Sigmoid colon (tissue), 7 donors: ENCODE measurements at regions of chr22 and their contacts with region 1.

Region 1: DNA sequence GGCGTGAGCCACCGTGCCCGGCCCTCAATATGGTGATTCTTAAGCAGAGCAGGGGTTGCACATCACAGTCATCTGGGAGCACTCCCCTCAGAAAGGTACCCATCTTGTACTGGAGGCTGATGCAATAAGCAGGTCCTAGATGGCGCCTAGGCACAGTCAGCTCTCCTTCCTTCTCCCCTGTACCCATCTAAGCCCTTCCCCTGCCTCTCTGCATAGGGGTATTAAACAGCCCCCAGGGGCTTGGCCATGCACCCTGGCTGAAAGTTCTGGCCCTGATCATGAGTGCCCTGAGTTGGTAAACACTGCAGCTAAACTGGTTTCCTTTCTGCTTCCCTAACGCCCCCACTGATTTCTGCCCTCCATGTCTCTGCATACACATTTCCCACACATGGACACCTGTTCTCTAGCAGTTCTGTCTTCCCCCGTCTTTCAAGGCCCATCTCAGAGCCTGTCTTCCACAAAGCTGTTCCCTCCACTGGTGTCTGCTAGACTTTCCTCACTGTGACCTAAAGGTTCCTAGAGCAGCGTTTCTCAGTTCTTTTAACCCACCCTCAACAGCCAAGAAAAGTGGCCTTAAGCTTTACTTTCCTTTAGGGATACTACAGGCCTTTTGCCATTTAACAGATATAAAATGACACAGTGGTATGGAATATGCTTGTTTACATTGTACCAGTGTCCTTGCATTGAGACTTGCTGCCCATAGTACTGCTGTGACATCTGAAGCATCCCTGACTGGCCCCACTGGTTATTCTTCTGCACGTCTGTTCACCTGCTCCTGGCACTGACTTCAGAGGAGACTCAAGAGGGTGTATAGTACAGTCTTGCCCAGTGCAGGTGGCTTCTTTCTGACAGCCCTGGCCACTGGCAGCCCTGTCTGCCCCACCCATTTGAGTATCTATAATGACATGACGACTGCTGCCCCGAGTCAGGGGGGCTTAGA is 15.6 kb downstream of the UBE2L3 start:
- DNase-seq: no peak
- H3K4me3 ChIP-seq: no peak overlapping the region
- H3K27ac ChIP-seq: no peak overlapping the region
- H3K4me1 ChIP-seq: peaks cover 0 to 48% (median 42%) of the 10 kb centered on the region in 4 donors
- H3K27me3 ChIP-seq: no peaks in the 10 kb centered on the region
- CTCF ChIP-seq: no peak
- EP300 ChIP-seq: no peak
- POLR2A ChIP-seq: no peak

Region 2: DNA sequence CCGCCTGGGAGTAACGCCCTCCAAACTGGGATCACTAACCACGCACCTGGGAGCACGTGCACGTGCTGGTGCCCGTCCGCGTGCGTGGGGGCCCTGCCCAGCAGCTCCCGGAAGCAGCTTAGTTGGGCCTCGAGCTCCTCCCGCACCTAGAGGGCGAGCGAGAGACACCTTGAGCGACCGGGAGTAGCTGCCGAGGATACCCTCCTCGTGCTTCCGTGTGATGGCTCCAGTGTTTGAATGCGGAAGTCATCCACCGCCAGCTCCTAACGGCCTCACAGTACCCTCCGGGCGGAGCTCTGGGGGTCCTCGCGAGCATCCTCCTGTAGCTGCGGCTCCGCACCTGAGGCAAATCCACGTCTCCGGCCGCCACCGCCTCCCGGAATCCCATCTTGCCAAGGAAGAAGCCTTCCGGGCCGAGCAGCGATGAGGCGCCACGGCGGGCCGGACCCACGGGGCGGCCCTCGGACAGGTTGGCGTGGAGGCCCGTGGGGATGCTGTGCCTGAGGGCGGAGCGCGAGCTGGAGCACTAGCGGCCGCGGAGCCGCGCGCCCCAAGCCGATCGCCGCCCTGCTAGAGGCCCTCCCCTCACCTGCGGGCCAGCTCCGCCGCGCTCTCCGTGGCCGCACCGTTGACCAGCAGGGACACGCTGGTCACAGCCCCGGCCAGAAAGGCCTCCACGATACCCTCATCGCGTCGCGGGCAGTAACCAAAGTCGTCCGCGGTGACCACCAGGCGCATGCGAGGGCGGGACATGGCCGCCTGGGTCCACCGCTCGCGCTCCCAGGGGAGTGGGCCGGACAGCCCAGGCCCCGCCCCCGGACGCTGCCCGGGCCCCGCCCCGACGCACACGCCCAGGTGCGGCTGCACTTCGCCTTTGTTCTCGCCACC is 46.4 kb after region 1 on chr22 and contains the start of gene YDJC:
- intact Hi-C with region 1: loop called (anchors 5 kb)
- DNase-seq: peak; percentile 94
- H3K4me3 ChIP-seq: peak within 1 kb of the TSS; percentile 65 to 98 (median 78)
- H3K27ac ChIP-seq: peak within 1 kb of the TSS; percentile 73 to 86 (median 80)
- H3K4me1 ChIP-seq: peaks cover 0 to 20% (median 14%) of the 10 kb centered on the region in 4 donors
- H3K27me3 ChIP-seq: no peaks in the 10 kb centered on the region
- CTCF ChIP-seq: peak in 3 of 4 experiments; percentile 13 to 95 (median 68)
- EP300 ChIP-seq: no peak
- POLR2A ChIP-seq: peak in 1 of 2 donors; percentile 14
- total RNA-seq, gene YDJC: 8.3 to 16.3 (median 15.3) TPM